ENCODE measurements at regions of chr11 and their contacts with region 1.

Region 1: GRCh38 chr11:35165423-35166368 is 26.7 kb downstream of the CD44 start:
- DNase-seq: peak; percentile 93
- ATAC-seq: peak; percentile 67
- H3K4me3 Mint-ChIP-seq: peak overlapping the region; percentile 64
- H3K27ac Mint-ChIP-seq: peak overlapping the region; percentile 98
- H3K4me1 Mint-ChIP-seq: peaks cover 100% of the 10 kb centered on the region
- H3K27me3 Mint-ChIP-seq: no peaks in the 10 kb centered on the region

Region 2: GRCh38 chr11:34997952-34998528 is 167.7 kb before region 1 on chr11:
- CTCF ChIA-PET with region 1: interaction called, 11 read pairs
- POLR2A ChIA-PET with region 1: interaction called, 3 read pairs
- intact Hi-C with region 1: no loop called
- DNase-seq: no peak
- ATAC-seq: peak; percentile 39
- H3K4me3 Mint-ChIP-seq: no peak overlapping the region
- H3K27ac Mint-ChIP-seq: peak overlapping the region; percentile 11
- H3K4me1 Mint-ChIP-seq: peaks cover 30% of the 10 kb centered on the region
- H3K27me3 Mint-ChIP-seq: no peaks in the 10 kb centered on the region

Region 3: DNA sequence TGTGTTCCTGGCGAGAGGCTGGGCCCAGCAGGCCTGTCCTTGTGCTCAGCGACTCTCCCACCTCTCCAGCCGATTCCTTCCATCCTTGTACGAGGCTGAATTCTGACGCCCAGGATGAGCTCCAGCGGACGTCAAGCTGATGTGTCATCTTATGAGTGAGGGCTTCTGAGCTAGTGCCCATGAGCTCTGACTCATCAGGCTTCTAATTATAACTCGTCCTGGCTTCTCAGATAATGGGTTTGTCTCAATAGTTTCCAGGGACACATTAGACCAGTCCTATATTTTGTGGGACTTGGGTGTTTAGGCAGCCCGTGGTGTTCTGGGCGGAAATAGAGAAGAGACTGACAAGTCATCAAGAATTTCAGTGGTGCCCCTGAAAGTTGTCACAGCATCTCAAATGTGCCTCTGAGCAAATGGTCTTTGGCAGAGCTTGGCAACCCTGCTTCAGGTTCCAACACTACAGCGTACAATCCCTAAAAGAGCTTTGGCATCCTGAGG is 134.9 kb before region 1 on chr11:
- CTCF ChIA-PET with region 1: interaction called, 5 read pairs
- POLR2A ChIA-PET with region 1: interaction called, 4 read pairs
- intact Hi-C with region 1: loop called in 1 of 2 experiments (anchors 2 kb)
- DNase-seq: peak; percentile 67
- ATAC-seq: peak; percentile 71
- H3K4me3 Mint-ChIP-seq: peak overlapping the region; percentile 50
- H3K27ac Mint-ChIP-seq: peak overlapping the region; percentile 93
- H3K4me1 Mint-ChIP-seq: peaks cover 56% of the 10 kb centered on the region
- H3K27me3 Mint-ChIP-seq: no peaks in the 10 kb centered on the region

Region 4: GRCh38 chr11:35082321-35083182 is 83.1 kb before region 1 on chr11:
- CTCF ChIA-PET with region 1: interaction called, 6 read pairs
- POLR2A ChIA-PET with region 1: interaction called, 5 read pairs
- intact Hi-C with region 1: loop called (anchors 1 kb)
- DNase-seq: peak; percentile 89
- ATAC-seq: peak; percentile 78
- H3K4me3 Mint-ChIP-seq: peak overlapping the region; percentile 30
- H3K27ac Mint-ChIP-seq: peak overlapping the region; percentile 85
- H3K4me1 Mint-ChIP-seq: peaks cover 93% of the 10 kb centered on the region
- H3K27me3 Mint-ChIP-seq: no peaks in the 10 kb centered on the region

Region 5: GRCh38 chr11:35151241-35151640 is 14.5 kb before region 1 on chr11:
- CTCF ChIA-PET with region 1: interaction called, 39 read pairs
- POLR2A ChIA-PET with region 1: interaction called, 49 read pairs
- intact Hi-C with region 1: loop called (anchors 1 kb)
- DNase-seq: no peak
- ATAC-seq: no peak
- H3K4me3 Mint-ChIP-seq: no peak overlapping the region
- H3K27ac Mint-ChIP-seq: peak overlapping the region; percentile 79
- H3K4me1 Mint-ChIP-seq: peaks cover 100% of the 10 kb centered on the region
- H3K27me3 Mint-ChIP-seq: no peaks in the 10 kb centered on the region

Region 6: DNA sequence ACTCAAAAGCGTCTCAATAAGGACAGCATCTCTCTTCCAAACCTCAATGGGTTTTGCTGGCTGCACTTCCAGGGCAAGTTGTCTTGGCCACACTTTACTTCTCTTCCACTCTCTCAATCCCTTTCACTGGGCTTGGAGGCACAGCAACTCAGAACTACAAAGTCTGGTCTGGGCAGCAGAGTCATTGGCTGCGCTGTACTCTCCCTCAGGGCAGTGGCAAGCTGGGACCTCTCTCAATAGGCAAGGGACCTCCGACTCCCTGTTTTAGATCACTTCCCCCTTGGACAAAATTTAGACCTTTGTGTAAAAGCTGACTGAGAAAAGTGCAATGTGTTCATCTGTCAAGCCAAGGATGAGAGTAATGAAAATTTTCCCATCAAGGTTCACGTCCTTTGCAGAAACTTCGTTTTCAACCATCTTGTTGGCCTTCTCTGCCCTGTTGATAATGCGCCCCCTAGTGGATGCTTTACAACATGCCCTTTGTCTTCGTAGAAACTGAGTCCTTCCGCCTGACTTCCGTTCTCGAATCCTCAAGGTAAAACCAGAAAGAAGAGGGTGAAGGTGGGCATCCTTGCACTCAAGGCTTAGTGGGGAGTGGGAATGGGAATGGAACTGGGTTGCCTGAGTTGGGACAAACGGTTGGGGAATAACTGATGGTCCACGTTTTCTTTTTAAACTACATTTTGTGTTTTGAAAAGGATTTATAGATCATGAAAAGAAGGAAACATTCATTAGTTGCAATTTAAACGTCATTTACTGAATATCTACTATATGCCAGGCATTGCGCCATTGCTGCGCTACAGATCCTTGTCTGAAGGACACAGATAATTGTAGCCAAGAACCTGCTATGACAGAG is 72.4 kb after region 1 on chr11:
- CTCF ChIA-PET with region 1: interaction called, 3 read pairs
- POLR2A ChIA-PET with region 1: no interaction called
- intact Hi-C with region 1: loop called in 1 of 2 experiments (anchors 5 kb)
- DNase-seq: peak; percentile 78
- ATAC-seq: no peak
- H3K4me3 Mint-ChIP-seq: no peak overlapping the region
- H3K27ac Mint-ChIP-seq: peak overlapping the region; percentile 74
- H3K4me1 Mint-ChIP-seq: peaks cover 68% of the 10 kb centered on the region
- H3K27me3 Mint-ChIP-seq: no peaks in the 10 kb centered on the region

Region 7: DNA sequence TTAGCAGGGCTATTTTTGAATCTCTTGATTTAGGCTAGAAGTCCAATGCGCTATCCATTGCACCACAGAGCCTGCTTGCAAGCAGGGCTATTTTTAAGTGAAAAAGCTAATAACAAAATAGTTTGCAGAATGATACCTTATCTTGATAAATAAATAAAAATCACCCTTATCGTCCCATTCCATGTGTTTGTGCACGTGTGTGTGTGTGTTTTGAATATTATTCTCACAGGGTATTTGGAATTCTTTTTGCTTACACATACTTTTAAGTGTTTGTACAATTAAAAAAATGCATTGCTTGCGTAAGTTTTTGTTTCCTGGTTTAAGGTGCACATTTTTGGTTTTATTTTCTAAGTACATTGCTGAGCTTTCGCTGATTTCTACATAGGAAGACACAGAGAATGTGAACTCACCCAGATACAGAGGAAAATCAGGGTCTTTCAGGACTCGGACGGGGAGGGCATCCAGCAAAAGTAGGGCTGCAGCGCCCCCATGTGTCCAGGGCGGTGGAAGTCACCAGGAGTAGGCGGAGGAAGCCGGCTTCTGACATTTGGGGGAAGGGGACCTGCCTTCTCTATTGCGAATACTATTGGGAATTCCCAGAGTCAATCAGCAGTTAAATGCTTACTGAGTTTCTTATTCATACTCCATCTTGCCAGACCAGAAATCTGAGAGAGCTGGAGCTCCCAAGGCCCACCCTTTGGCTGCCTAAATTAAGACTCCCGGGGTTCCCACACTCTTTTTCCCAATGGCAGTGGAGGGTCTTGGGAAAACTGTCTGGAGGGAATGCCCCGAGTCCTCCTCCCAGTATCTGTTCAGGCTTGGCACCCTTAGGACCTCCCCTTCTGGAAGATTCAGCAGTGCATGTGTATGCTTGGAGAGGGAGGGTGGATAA is 226.5 kb after region 1 on chr11:
- CTCF ChIA-PET with region 1: no interaction called
- POLR2A ChIA-PET with region 1: interaction called, 4 read pairs
- intact Hi-C with region 1: loop called (anchors 1 kb)
- DNase-seq: peak; percentile 91
- ATAC-seq: peak; percentile 77
- H3K4me3 Mint-ChIP-seq: no peak overlapping the region
- H3K27ac Mint-ChIP-seq: no peak overlapping the region
- H3K4me1 Mint-ChIP-seq: peaks cover 29% of the 10 kb centered on the region
- H3K27me3 Mint-ChIP-seq: no peaks in the 10 kb centered on the region

Region 8: GRCh38 chr11:35598254-35599125 is 432.8 kb after region 1 on chr11:
- CTCF ChIA-PET with region 1: no interaction called
- POLR2A ChIA-PET with region 1: no interaction called
- intact Hi-C with region 1: no loop called
- DNase-seq: peak; percentile 17
- ATAC-seq: peak; percentile 72
- H3K4me3 Mint-ChIP-seq: no peak overlapping the region
- H3K27ac Mint-ChIP-seq: no peak overlapping the region
- H3K4me1 Mint-ChIP-seq: no peaks in the 10 kb centered on the region
- H3K27me3 Mint-ChIP-seq: peaks cover 36% of the 10 kb centered on the region

Measured in activated CD4-positive, alpha-beta T cell treated with anti-CD3 and anti-CD28 coated beads for 36 hours (primary cell).